ENCODE measurements at regions of chr1 and their contacts with region 1.

Region 1: DNA sequence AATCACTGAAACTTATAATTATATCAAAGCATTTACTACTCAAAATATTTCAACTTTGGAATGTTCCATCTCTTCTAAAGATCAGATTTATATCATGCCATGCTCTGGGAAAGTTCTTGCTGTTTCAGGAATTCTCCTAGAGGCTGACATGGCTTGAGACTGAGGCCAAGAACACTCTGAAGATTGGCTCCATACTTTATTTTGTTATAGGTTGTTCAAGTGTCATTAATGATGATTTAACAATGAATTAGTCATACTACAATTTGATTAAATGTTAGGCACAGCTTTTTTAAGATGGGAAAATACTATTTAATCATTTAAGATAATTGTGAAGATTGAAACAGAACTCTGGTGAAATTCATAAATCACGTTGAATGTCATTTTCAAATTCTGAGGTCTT is 255.4 kb downstream of the GREM2 start:
- DNase-seq: no peak
- H3K4me3 Mint-ChIP-seq: no peak overlapping the region
- H3K27ac Mint-ChIP-seq: no peak overlapping the region
- H3K4me1 Mint-ChIP-seq: no peaks in the 10 kb centered on the region
- H3K27me3 Mint-ChIP-seq: no peaks in the 10 kb centered on the region
- CTCF ChIP-seq: no peak

Region 2: DNA sequence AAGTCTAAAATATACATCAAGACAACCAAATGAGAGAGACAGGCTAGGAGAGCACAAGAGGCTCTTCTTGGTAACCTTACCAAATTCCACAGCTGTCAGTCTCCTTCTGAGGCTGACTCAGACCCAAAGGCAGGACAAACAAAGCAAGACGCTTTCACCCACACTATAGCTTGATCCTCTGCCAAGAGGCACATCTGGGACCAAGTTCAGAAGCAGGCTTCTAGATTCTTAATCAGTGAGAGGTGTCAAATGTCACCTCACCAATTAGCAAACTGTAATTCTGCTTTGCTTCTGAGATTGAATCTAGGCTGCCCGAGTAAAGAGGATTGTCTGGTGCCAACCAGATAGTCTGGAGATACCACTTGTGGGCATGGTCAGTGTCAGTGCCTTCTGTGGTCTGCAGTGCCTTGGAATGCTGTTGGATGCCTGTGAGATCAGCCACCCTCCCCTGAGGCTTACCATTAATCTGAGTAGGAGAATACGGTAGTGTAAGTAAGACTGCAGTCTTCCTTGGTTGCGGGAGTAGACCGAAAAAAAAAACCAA is 113.9 kb before region 1 on chr1:
- CTCF ChIA-PET with region 1: no interaction called
- POLR2A ChIA-PET with region 1: no interaction called
- intact Hi-C with region 1: loop called (anchors 5 kb)
- DNase-seq: peak; percentile 96
- H3K4me3 Mint-ChIP-seq: no peak overlapping the region
- H3K27ac Mint-ChIP-seq: peak overlapping the region; percentile 0
- H3K4me1 Mint-ChIP-seq: peaks cover 28% of the 10 kb centered on the region
- H3K27me3 Mint-ChIP-seq: no peaks in the 10 kb centered on the region
- CTCF ChIP-seq: no peak

Measured in MCF 10A (cell line).